Mucosa of descending colon (tissue), 3 donors: ENCODE measurements at regions of chr17 and their contacts with region 1.

Region 1: GRCh38 chr17:16537130-16537458 is 31.9 kb downstream of the ZNF287 start:
- DNase-seq: no peak
- ATAC-seq: no peak
- H3K4me3 ChIP-seq: no peak overlapping the region
- H3K4me1 ChIP-seq: peaks cover 3% of the 10 kb centered on the region
- CTCF ChIP-seq: no peak

Region 2: DNA sequence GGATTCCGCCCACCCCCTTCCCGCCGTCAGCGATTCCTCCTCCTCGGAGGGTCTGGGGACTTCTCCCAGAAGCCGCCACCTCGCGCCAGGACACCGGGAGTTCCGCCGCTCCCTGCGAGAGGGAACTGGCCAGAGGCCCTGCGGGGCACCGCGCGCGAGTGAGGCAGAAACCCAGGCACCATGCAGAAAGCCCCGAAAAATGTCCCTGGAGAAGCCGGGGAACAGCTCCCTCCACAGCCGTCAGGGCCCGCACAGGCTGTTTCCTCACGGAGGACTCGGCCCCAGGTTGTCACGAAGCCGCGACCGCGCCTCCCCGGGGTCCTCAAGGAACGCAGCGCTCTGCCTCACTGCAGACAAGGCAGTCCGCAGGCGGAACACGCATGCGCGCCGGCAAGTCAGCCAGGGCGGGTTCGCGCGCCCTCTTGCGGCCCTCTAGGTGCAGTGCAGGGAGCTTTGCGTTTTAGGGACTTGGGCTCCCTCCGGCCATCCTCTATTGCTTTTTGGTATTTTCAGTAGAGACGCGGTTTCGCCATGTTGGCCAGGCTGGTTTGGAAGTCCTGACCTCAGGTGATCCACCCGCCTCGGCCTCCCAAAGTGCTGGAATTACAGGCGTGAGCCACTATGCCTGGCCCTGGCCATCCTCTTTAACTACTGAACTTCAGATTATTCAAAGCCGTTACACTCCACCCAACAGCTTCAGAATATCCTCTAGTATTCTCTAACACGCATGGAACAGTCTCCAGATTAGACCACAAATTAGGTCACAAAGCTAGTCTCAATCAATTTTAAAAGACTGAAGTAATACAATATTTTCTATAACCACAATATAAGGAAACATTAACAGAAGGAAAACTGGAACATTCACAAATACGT is 52.2 kb after region 1 on chr17:
- intact Hi-C with region 1: loop called in 1 of 2 experiments (anchors 5 kb)
- DNase-seq: peak; percentile 91 to 95 (median 92)
- ATAC-seq: peak; percentile 100
- H3K4me3 ChIP-seq: peak overlapping the region; percentile 15
- H3K4me1 ChIP-seq: peaks cover 4% of the 10 kb centered on the region
- CTCF ChIP-seq: peak; percentile 99

Region 3: DNA sequence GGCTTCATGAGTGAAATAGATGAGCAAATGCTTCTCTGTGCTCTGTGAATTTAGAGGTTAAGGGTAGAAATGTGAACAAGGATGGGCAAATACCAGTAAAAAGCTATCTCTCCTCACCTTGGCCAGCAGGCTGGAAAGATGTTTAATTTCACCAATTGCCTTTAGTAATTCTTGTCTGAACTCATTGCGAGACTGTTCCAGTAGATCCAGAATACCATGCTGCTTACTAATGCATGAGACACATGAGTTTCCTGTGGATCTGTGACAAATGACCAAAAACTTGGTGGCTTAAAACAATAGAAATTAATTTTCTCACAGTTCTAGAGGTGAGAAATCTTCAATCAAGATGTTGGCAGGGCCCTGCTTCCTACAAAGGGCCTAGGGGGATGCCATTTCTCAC is 125.8 kb after region 1 on chr17:
- intact Hi-C with region 1: no loop called
- DNase-seq: no peak
- ATAC-seq: no peak
- H3K4me3 ChIP-seq: no peak overlapping the region
- H3K4me1 ChIP-seq: no peaks in the 10 kb centered on the region
- CTCF ChIP-seq: no peak

Region 4: DNA sequence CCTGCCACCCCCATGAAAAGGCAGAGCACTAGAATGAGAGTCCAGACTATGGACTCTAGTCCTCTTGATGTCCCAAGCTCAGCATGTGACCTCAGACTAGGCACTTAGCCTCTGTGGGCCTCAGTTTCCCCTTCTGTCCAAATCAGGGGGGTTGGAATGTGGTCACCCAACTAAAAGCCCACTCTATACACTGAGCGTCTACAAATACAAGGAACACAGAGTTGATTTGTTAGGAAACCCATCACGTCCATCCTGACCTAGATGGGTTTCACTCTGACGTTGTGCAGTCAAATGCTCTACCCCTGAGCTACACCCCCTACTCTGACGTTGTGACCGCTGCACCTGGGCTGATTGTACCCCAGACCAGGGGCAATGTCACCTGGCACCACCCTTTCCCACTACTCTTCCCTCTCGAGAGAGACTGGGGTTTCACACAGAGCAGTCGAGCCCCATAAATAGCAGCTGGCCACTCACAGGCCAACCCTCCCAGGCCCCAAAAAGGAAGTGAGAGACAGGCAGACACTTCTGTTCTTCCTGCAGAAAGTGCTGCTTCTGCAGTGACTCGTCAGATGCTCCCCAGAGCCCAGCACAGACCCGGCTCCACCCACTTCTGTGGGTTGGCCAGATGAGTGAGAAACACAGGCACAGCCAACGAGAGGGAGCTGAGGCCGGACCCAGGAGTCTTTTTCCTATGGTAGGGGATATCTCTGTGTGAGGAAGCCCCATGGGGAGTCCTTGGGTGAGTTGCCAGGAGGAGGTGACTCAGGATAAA is 450.9 kb after region 1 on chr17:
- intact Hi-C with region 1: loop called in 1 of 2 experiments (anchors 10 kb)
- DNase-seq: peak; percentile 68 to 88 (median 73)
- ATAC-seq: peak; percentile 69
- H3K4me3 ChIP-seq: no peak overlapping the region
- H3K4me1 ChIP-seq: peaks cover 11% of the 10 kb centered on the region
- CTCF ChIP-seq: no peak